Activated T-helper 2 cell treated with anti-CD3 and anti-CD28 coated beads, Interferon-gamma antibody, Interleukin-2, Interleukin-4, amounts not matched to agents 10 μg/mL and 5 μg/mL and 100 μg/mL, durations not matched to agents 14 hours and 24 hours and 36 hours (primary cell): ENCODE measurements at regions of chr2 and their contacts with region 1.

Region 1: GRCh38 chr2:152175458-152176325 is at the start of gene STAM2:
- DNase-seq: peak; percentile 91
- H3K4me3 Mint-ChIP-seq: peak within 1 kb of the TSS; percentile 92
- H3K27ac Mint-ChIP-seq: peak within 1 kb of the TSS; percentile 96
- H3K4me1 Mint-ChIP-seq: peaks cover 29% of the 10 kb centered on the region
- H3K27me3 Mint-ChIP-seq: peaks cover 2% of the 10 kb centered on the region
- total RNA-seq, gene STAM2: 14.3 and 15.9 TPM in 2 replicates

Region 2: DNA sequence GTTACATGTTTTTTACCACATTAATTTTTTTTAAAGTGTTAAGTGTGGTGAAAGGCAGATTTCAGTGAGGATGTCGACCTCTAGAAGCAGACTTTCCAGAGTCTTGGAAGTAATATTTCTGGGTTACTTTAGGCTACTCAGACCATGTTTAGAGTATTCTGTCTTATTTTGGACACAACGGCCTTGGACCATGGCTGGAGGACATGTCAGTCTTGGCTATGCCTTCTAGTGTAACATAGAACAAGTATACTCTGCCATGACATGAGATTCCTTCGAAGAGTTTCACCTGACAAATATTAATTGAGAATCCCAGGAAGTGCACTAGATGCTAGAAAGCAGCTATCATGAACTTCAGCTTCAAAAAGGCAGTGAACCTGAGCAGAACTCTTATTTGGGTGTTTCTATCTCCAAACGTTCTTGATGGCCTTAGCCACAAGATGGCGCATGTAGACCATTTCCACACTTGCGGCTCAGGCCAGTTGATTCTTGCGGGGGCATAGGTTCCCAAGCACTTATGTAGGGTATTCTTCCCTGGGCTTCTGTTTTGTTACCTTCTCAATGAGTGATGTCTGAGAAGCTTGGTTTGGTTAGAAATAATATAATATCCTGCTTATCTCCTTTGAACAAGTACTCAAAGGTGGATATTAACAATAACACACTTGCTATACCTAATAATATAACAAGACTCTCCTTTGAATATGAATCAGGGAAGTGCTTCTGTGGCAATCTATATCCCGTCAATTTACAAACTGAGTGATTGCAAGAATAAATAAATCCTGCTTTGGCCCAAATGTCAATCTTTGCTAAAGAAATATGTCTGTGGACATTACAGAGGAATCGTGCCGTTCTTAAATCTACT is 138.9 kb before region 1 on chr2:
- intact Hi-C with region 1: loop called (anchors 2 kb)
- DNase-seq: peak; percentile 22
- H3K4me3 Mint-ChIP-seq: no peak overlapping the region
- H3K27ac Mint-ChIP-seq: no peak overlapping the region
- H3K4me1 Mint-ChIP-seq: no peaks in the 10 kb centered on the region
- H3K27me3 Mint-ChIP-seq: peaks cover 5% of the 10 kb centered on the region

Region 3: DNA sequence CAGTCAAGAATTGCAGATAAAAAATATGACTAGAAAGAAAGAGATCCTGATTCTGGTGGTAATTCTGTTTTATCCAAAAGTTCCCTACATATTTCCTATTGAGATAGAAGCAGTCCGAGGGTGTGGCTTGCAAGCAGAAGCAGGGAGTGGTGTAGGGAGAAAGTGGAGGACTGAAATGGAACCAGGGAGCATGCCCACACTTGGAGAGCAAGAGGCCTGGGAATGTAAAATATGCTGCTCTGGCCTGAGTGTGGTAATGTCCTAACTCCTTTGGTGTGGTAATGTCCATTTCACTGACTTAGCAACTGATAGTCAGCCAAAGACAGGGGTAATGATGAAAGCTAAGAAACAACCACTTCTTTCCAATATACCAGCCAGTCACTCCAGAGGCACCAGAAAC is 129.1 kb after region 1 on chr2:
- intact Hi-C with region 1: no loop called
- DNase-seq: no peak
- H3K4me3 Mint-ChIP-seq: no peak overlapping the region
- H3K27ac Mint-ChIP-seq: no peak overlapping the region
- H3K4me1 Mint-ChIP-seq: no peaks in the 10 kb centered on the region
- H3K27me3 Mint-ChIP-seq: peaks cover 13% of the 10 kb centered on the region

Region 4: GRCh38 chr2:152407204-152407721 is 231.6 kb after region 1 on chr2:
- intact Hi-C with region 1: loop called (anchors 2 kb)
- DNase-seq: no peak
- H3K4me3 Mint-ChIP-seq: peak overlapping the region; percentile 67
- H3K27ac Mint-ChIP-seq: peak overlapping the region; percentile 84
- H3K4me1 Mint-ChIP-seq: peaks cover 74% of the 10 kb centered on the region
- H3K27me3 Mint-ChIP-seq: no peaks in the 10 kb centered on the region

Region 5: DNA sequence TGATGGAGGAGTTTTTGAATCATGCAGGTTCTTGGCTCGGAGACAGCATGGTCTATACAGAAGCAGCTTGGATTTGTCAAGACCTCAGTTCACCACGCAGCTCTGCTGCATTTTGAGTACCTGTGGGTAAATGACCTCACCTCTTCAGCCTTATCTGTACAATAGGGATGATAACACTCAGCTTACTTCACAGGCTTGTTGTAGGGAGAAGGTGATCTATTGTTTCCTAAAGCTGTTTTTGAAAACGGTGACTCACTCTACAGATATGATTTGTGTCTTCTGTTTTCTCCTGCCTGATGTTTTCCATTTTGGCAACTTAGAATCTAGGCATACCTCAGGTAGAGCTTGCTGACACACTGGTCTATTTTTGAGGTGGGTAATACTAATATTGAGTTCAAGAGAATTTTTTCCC is 239.5 kb after region 1 on chr2:
- intact Hi-C with region 1: loop called (anchors 2 kb)
- DNase-seq: no peak
- H3K4me3 Mint-ChIP-seq: peak overlapping the region; percentile 8
- H3K27ac Mint-ChIP-seq: peak overlapping the region; percentile 88
- H3K4me1 Mint-ChIP-seq: peaks cover 53% of the 10 kb centered on the region
- H3K27me3 Mint-ChIP-seq: peaks cover 2% of the 10 kb centered on the region

Region 6: DNA sequence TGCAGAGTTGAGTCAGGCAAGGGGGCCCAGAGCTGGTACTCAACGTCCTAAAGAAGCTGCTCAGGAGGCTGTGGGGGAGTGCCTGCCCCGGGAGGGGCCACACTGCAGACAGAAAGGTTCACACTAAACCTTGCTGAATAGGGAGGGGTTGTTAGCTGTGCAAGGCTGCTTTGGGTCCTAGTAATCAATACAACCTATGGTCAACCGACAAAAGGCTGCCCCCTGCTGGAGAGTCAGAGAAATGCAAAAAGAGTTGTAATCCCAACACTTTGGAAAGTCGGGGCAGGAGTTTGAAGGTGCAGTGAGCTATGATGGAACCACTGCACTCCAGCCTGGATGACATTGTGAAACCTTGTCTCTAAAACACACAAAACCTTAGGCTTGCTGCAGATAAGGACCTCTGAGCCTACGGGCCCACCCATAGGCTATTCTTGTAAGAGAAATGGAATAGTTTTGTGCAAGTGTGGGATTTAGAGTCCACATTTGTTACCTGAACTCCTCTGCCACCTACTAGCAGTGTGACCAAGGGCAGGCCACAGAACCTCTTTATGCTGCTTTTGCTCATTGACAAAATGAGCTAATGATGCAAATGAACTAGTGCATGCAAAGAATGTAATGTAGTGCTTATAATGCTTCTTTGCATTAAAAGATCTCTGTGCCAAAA is 460.1 kb after region 1 on chr2:
- intact Hi-C with region 1: loop called (anchors 1 kb)
- DNase-seq: peak; percentile 46
- H3K4me3 Mint-ChIP-seq: no peak overlapping the region
- H3K27ac Mint-ChIP-seq: no peak overlapping the region
- H3K4me1 Mint-ChIP-seq: no peaks in the 10 kb centered on the region
- H3K27me3 Mint-ChIP-seq: no peaks in the 10 kb centered on the region

Region 7: DNA sequence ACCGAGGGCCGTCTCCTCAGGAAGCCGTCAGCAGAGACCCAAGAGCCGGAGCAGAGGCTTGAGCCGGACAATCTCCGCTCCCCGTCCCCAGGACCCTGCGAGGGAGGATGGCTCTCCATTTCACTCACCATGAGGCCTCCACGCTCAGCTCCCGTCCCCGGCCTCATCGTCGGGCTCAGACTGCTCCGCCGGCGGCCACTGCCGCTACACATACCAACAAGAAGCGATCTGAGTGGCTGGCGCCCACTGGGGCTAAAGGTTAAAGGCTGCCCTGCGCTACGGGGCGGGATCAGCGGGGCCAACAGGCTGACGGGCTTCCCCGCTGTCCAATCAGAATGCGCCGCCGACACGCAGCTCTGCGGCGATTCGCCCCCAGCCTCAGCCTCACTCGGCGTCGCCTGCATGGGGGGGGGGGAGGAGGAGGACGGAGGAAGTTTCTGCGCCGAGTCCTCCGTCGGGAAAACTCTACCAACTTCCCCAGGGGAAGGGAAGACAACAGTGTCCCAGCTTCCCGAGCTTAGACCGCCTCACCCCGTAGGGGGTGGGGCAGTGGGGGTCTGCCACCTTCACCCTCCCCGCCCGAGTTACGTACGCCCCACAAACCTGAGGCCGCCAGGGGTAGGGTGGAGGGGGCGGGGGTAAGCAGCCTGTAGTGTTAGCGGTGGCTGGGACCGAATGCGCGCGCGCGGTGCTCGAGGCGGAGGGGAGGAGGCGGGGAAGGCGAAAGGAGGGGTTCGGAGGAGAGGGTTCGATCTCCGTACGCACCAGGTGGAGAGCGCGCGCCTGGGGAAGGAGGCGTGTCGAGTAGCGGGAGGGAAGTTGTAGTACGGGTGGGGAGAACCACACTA is 541.8 kb after region 1 on chr2 and contains the start of gene PRPF40A:
- intact Hi-C with region 1: loop called (anchors 2 kb)
- DNase-seq: peak; percentile 97
- H3K4me3 Mint-ChIP-seq: peak within 1 kb of the TSS; percentile 98
- H3K27ac Mint-ChIP-seq: peak within 1 kb of the TSS; percentile 98
- H3K4me1 Mint-ChIP-seq: peaks cover 46% of the 10 kb centered on the region
- H3K27me3 Mint-ChIP-seq: no peaks in the 10 kb centered on the region
- total RNA-seq, gene PRPF40A: 144 and 170 TPM in 2 replicates